Activated CD4-positive, alpha-beta memory T cell treated with anti-CD3 and anti-CD28 coated beads for 36 hours (primary cell): ENCODE measurements at regions of chr11 and their contacts with region 1.

Region 1: DNA sequence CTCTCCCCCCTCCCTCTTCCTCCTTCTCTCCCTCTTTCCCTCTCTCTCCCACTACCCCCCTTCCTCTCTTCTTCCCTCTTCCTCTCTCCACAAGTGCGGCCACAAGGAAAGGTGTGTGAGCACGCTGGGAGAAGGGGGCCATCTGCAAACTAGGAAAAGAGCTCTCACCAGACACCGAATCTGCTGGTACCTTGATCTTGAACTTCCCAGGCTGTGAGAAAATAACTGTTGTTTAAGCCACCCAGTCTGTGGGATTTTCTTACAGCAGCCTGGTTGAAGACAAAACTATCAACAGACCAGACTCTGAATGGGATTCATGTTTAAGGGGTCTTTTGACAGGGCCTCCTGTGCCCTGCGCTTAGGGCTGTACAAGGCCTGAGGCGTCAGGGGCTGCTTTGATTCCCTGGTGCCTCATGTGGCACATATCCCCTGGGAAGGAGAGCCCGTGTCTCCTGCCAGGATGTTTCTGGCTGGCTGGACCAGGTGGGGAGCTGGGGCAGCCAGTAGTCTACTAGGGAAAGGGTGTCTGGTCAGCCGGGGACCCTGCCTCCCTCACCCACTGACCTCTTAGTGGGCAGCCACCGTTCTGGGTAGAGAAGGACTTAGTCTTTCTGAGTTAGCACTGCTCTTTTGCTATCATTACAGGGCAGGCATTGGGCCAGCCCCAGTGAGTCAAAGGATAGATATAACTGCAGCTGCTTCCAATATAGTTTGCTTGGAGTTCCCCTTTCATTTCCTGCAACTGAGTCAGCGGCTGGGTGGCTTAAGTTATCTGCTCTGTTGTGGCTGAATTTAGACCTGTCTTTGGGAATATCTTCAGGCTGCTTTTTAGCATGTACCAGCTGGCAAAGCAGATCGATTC is 6.2 kb downstream of the PANX1 start:
- DNase-seq: peak; percentile 74
- H3K4me3 Mint-ChIP-seq: no peak overlapping the region
- H3K27ac Mint-ChIP-seq: peak overlapping the region; percentile 47
- H3K4me1 Mint-ChIP-seq: peaks cover 42% of the 10 kb centered on the region
- H3K27me3 Mint-ChIP-seq: no peaks in the 10 kb centered on the region

Region 2: GRCh38 chr11:93662177-93662575 is 472.7 kb before region 1 on chr11:
- CTCF ChIA-PET with region 1: no interaction called
- POLR2A ChIA-PET with region 1: no interaction called
- intact Hi-C with region 1: loop called (anchors 10 kb)
- DNase-seq: no peak
- H3K4me3 Mint-ChIP-seq: peak overlapping the region; percentile 94
- H3K27ac Mint-ChIP-seq: peak overlapping the region; percentile 95
- H3K4me1 Mint-ChIP-seq: peaks cover 43% of the 10 kb centered on the region
- H3K27me3 Mint-ChIP-seq: no peaks in the 10 kb centered on the region

Region 3: GRCh38 chr11:93908689-93909088 is 226.2 kb before region 1 on chr11:
- CTCF ChIA-PET with region 1: no interaction called
- POLR2A ChIA-PET with region 1: no interaction called
- intact Hi-C with region 1: no loop called
- DNase-seq: no peak
- H3K4me3 Mint-ChIP-seq: no peak overlapping the region
- H3K27ac Mint-ChIP-seq: no peak overlapping the region
- H3K4me1 Mint-ChIP-seq: no peaks in the 10 kb centered on the region
- H3K27me3 Mint-ChIP-seq: no peaks in the 10 kb centered on the region

Region 4: DNA sequence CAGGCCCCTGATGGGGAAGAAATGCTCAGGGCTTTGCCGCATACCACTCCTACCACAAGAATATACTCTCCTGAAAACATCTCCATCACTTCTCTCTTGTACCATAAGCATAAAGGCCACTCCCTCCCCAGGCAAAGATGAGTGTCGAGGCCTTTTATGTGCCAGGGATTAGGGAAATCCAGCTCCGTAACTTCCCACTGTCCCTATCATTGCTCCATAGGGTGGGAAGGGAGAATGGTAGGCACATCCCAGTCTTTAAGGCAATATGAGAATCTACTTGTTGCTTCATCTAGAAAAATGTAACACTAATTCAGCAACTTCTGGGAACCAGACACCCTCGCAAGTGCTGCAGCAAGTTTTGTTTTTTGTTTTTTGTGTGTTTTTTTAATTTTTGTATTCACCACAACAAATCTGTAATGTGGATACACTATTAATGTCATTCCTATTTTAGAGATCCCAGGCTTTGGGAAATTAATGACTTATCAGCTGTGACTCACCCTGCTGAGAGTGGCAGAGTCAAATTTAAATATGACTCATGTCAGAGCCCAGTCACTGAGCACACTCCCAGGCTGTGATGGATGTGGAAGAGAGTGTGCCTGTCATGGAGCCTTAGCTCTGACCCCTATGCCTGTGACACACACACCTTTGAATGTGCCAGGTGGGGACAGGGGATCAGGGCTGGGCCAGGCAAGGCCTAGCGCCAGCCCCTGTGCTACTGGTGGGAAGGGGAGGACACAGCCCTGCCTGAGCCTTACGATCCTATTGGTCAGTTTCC is 17.2 kb after region 1 on chr11:
- CTCF ChIA-PET with region 1: no interaction called
- POLR2A ChIA-PET with region 1: interaction called, 7 read pairs
- intact Hi-C with region 1: loop called (anchors 1 kb)
- DNase-seq: peak; percentile 50
- H3K4me3 Mint-ChIP-seq: no peak overlapping the region
- H3K27ac Mint-ChIP-seq: no peak overlapping the region
- H3K4me1 Mint-ChIP-seq: peaks cover 58% of the 10 kb centered on the region
- H3K27me3 Mint-ChIP-seq: no peaks in the 10 kb centered on the region

Region 5: GRCh38 chr11:94169930-94170545 is 35.2 kb after region 1 on chr11:
- CTCF ChIA-PET with region 1: no interaction called
- POLR2A ChIA-PET with region 1: no interaction called
- intact Hi-C with region 1: loop called (anchors 5 kb)
- DNase-seq: no peak
- H3K4me3 Mint-ChIP-seq: no peak overlapping the region
- H3K27ac Mint-ChIP-seq: no peak overlapping the region
- H3K4me1 Mint-ChIP-seq: peaks cover 17% of the 10 kb centered on the region
- H3K27me3 Mint-ChIP-seq: no peaks in the 10 kb centered on the region